OCI-LY7 (cell line): ENCODE measurements at regions of chr5 and their contacts with region 1.

Region 1: GRCh38 chr5:65925601-65926275 is 637 bp upstream of the ERBIN start:
- DNase-seq: peak; percentile 92
- H3K4me3 ChIP-seq: peak overlapping the region; percentile 83
- H3K27ac ChIP-seq: peak overlapping the region; percentile 97
- H3K4me1 ChIP-seq: peaks cover 30% of the 10 kb centered on the region
- CTCF ChIP-seq: peak; percentile 67

Region 2: DNA sequence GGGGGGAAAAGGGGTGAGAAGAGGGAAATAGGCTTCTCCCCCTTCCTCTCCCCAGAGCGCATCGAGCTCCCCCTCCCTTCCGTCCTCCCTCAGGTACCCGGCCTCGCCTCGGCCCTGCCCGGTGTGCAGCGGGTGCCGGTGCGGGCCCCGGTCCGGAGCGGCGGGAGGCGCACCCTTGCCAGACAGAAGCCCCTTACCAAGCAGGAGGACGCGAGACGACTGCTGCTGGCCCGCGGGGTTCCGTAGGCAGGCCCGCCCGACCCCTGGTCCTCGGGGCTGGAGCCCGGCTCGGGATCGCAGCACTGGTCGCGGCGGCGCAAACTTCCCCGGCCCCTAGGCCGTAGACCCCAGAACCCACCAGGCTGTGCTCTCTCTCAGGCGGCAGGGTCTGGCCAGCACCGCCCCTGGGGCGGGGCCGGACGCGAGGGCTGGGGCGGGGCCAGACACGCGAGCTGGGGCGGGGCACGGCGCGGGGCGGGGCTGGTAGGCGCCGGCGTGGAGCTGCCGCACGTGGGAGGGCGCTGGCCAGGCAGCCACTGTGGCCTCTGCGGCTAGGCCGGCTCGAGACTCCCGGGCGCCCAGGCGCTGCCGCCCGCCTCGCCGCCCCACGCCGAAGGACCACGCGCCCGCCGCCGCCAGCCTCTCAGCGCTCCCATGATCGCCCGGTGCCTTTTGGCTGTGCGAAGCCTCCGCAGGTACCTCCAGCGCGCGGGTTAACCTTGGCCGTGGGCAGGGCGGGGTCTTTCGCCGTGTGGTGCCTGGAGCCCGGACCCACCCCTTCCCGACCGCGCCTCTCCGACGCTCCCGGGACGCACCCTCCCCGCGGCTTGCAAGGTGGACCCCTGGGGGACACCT is 203.8 kb before region 1 on chr5 and contains the starts of genes NLN and SGTB:
- CTCF ChIA-PET with region 1: no interaction called
- POLR2A ChIA-PET with region 1: interaction called, 3 read pairs
- intact Hi-C with region 1: loop called (anchors 5 kb)
- DNase-seq: peak; percentile 85
- H3K4me3 ChIP-seq: peak within 1 kb of the TSS; percentile 89
- H3K27ac ChIP-seq: peak within 1 kb of the TSS; percentile 45
- H3K4me1 ChIP-seq: peaks cover 39% of the 10 kb centered on the region
- CTCF ChIP-seq: no peak
- total RNA-seq, gene NLN: 11.9 and 14.9 TPM in 2 replicates
- total RNA-seq, gene SGTB: 3.6 and 4.3 TPM in 2 replicates

Region 3: DNA sequence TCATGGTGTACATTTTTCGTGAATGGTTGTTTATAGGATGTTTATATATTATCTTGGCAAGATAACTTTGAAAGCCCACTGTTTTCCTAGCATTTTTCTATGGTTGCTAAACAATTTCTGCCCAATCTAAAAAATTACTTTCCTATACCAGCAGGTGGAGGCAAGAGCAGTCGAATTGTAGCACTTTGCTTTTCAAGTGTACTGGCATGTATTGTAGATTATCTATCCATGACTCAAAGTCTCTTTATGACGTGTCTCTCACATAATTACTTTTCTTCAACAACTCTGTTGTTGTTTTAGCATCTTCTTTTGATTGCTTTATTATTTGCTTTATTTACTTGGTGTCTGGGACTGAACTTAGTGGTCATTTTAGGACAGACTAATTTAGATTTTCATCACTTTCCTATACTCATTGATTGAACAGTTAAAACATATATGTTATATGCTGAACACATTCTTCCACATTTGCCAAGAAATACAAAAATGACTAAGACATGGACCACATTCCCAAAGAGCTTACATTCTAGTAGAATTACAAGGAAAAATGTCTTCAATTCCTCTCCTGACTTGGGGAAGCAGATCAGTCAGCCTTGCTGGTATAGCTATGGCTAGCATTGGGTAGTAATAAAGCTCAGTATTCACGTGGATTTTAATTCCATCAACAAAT is 183.0 kb before region 1 on chr5:
- CTCF ChIA-PET with region 1: no interaction called
- POLR2A ChIA-PET with region 1: interaction called, 4 read pairs
- intact Hi-C with region 1: loop called (anchors 2 kb)
- DNase-seq: peak; percentile 56
- H3K4me3 ChIP-seq: no peak overlapping the region
- H3K27ac ChIP-seq: no peak overlapping the region
- H3K4me1 ChIP-seq: no peaks in the 10 kb centered on the region
- CTCF ChIP-seq: peak; percentile 89

Region 4: DNA sequence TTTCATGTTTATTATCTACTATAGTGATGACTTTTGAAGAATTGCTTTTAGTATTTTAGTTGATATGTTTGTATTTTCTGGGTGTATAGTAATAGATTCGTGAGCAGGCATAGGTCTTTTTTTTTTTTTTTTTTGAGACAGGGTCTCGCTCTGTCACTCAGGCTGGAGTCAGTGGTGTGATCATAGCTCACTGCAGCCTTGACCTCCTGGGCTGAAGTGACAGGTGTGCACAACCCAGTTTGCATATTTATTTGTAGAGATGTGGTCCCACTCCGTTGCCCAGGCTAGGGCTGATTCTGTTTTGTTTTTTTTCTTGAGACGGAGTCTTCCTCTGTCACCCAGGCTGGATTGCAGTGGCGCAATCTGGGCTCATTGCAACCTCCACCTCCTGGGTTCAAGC is 12.5 kb after region 1 on chr5:
- CTCF ChIA-PET with region 1: no interaction called
- POLR2A ChIA-PET with region 1: interaction called, 16 read pairs
- intact Hi-C with region 1: no loop called
- DNase-seq: peak; percentile 91
- H3K4me3 ChIP-seq: peak overlapping the region; percentile 54
- H3K27ac ChIP-seq: peak overlapping the region; percentile 87
- H3K4me1 ChIP-seq: peaks cover 65% of the 10 kb centered on the region
- CTCF ChIP-seq: no peak

Region 5: DNA sequence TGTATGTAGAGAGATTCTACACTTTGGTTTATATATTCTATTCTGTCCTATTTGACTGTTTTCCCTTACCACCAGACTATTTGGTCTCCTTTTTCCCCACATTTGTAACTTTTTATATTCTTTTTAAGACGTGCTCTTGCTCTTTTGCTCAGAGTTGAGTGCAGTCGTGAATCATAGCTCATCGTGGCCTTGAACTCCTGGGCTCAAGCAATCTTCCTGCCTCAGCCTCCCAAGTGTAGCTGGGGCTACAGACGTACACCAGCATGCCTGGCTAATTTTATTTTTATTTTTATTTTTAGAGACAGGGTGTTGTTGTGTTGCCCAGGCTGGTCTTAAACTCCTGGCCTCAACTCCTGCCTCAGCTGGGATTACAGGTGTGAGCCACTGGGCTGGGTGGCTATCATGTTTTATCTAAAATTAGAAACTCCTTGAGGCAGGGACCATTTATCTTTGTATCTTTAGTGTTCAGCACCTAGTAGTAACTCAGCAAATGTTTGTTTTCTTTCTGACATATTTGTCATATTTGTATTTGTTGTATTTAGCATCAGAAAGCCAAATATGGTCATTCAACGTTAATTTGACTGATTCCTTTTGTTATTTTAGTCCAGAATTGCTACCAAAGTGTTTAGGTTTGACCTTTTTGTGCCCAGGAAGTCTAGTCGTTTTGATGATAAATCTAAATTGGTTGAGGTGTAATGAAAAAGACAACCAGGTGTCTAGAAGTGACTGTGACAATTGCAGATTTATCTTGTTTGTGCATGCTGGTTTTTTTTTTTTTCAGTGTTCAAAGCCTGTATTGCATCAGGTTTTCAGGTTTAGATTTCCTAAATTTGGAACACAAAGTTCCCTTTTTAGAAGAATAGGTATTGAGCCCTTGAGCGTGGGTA is 45.0 kb after region 1 on chr5:
- CTCF ChIA-PET with region 1: no interaction called
- POLR2A ChIA-PET with region 1: interaction called, 9 read pairs
- intact Hi-C with region 1: loop called (anchors 2 kb)
- DNase-seq: peak; percentile 68
- H3K4me3 ChIP-seq: peak overlapping the region; percentile 43
- H3K27ac ChIP-seq: peak overlapping the region; percentile 82
- H3K4me1 ChIP-seq: peaks cover 47% of the 10 kb centered on the region
- CTCF ChIP-seq: no peak

Region 6: DNA sequence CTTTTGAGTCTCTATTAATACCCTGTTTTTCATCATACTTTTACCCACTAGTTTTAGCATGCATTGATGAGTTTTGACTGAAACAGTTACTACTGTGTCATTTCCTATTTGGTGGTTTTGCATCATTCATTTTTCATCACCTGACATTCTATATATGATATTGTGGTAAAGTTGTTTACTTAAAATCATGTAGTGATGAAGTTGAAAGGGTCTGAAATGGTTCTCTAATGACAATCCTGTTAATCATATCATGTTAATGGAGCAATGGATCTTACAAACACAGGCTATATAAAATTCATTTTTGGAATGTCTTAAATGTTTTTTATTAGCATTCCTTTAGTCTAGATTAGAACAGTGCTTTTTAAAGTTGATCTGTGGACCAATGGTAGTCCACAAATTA is 84.7 kb after region 1 on chr5:
- CTCF ChIA-PET with region 1: no interaction called
- POLR2A ChIA-PET with region 1: interaction called, 3 read pairs
- intact Hi-C with region 1: loop called (anchors 5 kb)
- DNase-seq: peak; percentile 12
- H3K4me3 ChIP-seq: no peak overlapping the region
- H3K27ac ChIP-seq: peak overlapping the region; percentile 20
- H3K4me1 ChIP-seq: peaks cover 26% of the 10 kb centered on the region
- CTCF ChIP-seq: no peak

Region 7: DNA sequence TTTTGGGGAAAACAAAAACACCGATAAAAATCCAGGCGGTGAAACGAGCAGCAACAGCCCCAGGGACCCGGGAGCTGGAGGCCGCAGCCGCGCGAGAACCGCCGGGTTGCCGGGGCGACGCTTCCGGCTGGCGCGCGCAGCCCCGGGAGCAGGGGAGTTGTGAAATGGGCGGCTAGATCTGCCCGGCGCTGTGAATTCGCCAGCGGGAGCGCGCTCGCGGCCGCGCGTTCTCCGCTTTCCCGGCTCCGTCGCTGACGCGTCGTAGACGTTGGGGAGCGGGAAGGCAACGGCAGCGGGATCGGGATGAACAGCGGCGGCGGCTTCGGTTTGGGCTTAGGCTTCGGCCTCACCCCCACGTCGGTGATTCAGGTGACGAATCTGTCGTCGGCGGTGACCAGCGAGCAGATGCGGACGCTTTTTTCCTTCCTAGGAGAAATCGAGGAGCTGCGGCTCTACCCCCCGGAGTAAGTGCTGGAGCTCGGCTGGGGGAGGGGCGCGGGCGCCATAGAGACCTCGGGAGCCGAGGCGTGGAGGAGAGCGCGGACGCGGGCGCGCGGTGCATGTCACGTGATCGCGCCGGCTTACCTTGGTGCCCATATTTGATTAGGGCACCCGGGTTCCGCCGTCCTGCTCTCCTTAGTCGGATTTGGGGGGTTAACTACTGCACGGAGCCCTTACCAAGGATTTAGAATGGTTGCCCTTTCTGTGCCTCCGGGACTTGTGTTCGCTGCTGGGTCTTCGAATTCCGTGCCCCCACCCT is 218.5 kb after region 1 on chr5 and contains the start of gene SREK1:
- CTCF ChIA-PET with region 1: no interaction called
- POLR2A ChIA-PET with region 1: interaction called, 3 read pairs
- intact Hi-C with region 1: loop called (anchors 1 kb)
- DNase-seq: peak; percentile 93
- H3K4me3 ChIP-seq: peak within 1 kb of the TSS; percentile 76
- H3K27ac ChIP-seq: peak within 1 kb of the TSS; percentile 82
- H3K4me1 ChIP-seq: peaks cover 21% of the 10 kb centered on the region
- CTCF ChIP-seq: no peak
- total RNA-seq, gene SREK1: 101 and 225 TPM in 2 replicates